ENCODE measurements at regions of chr6 and their contacts with region 1.

Region 1: DNA sequence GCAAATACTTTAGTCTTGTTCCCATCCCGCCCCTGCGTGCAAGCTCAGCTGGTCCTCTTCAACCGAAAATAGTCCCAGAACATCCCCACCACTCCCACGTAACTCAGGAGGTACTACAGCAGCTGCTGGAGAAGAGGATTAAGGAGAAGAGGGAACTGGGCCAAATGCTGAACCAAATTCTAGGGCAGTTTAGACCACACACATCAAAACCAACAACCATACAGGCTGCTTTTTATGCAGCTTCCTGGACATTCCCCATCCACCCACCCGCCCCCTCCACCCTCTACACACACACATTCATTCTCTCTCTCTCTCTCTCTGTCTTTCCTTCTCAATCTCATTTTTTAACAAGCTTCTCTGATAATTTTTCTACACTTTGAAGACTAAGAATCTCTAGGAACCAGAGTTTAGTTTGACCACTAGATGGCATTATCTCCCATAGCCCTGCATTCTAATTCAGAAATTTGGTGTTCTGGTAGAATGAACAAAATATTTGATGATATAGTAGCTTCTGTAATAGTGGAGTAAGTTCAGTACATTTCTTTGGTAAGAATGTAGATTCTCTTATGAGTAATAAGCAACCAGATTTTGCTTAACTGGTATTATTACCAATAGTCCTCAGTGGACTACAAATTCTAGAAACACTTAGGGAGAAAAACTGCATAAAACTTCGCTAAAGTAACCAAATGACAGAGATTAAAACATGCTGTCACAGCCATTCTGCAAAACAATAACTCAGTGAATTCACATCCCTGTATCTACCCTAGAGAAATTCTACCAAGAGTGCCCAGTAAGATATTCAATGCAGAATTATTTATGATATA is 52.1 kb upstream of the BEND6 start:
- DNase-seq: no peak
- H3K4me3 ChIP-seq: no peak overlapping the region
- H3K27ac ChIP-seq: no peak overlapping the region
- H3K4me1 ChIP-seq: no peaks in the 10 kb centered on the region
- H3K27me3 ChIP-seq: no peaks in the 10 kb centered on the region
- CTCF ChIP-seq: peak in 2 of 3 experiments; percentile 41 to 60; a peak in 2 of 4 replicates
- EP300 ChIP-seq: no peak
- POLR2A ChIP-seq: no peak
- RAD21 ChIP-seq: peak; percentile 52 to 55

Region 2: GRCh38 chr6:56890683-56891429 is 12.0 kb before region 1 on chr6:
- CTCF ChIA-PET with region 1: interaction called, 29 read pairs
- POLR2A ChIA-PET with region 1: interaction called, 3 read pairs
- DNase-seq: no peak
- H3K4me3 ChIP-seq: no peak overlapping the region
- H3K27ac ChIP-seq: no peak overlapping the region
- H3K4me1 ChIP-seq: no peaks in the 10 kb centered on the region
- H3K27me3 ChIP-seq: no peaks in the 10 kb centered on the region
- CTCF ChIP-seq: no peak
- EP300 ChIP-seq: no peak
- POLR2A ChIP-seq: no peak
- RAD21 ChIP-seq: no peak

Region 3: DNA sequence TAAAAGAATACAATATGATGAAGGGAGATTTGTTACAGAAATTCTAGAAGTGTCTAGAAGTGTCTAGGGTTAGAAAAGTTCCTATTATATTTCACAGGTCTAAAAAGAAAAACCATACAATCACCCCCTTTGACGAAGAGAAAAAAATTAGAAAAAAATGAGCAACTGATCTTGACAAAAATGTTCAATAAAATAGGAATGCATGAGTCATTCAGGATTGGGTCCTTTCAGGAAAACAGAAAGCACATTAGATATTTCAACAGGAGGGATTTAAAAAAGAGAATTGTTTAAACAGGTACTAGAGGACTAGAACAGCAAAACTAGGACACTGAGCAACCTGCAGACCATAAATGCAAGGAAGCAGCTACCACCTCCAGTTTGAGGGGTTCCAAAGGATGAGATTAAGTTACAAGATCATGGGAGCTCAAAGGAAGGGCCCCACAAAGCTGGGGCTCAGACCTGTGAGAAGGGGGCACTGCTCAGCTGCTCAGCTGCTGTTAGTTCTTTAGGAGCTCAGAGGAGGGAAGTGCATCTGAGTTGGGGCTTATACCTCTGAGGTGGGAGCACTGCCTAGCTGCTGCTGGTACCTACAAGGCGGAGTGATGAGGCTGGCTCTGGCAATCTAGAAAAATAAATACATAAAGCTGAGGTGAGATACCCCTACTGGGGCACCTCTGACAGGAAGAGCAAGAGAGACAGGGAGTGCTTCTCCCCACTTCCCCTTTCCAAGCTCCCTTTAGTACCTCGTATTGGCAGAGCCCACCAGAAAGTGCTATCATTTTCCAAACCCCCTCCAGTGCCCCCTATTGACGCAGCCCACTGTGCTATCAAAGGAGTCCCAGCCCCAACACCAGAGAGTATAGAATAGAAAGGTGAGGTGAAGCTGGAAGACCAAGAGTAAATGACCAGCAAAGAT is 24.9 kb after region 1 on chr6:
- CTCF ChIA-PET with region 1: interaction called, 66 read pairs
- POLR2A ChIA-PET with region 1: no interaction called
- DNase-seq: peak in 1 of 2 experiments; percentile 57
- H3K4me3 ChIP-seq: no peak overlapping the region; a peak in 1 of 8 replicates
- H3K27ac ChIP-seq: no peak overlapping the region
- H3K4me1 ChIP-seq: no peaks in the 10 kb centered on the region; a peak in 2 of 7 replicates
- H3K27me3 ChIP-seq: no peaks in the 10 kb centered on the region
- CTCF ChIP-seq: peak in 2 of 3 experiments; percentile 21 to 32; a peak in 3 of 4 replicates
- EP300 ChIP-seq: no peak
- POLR2A ChIP-seq: no peak
- RAD21 ChIP-seq: no peak; a peak in 1 of 4 replicates

Region 4: GRCh38 chr6:56955171-56956045 is 52.6 kb after region 1 on chr6:
- CTCF ChIA-PET with region 1: interaction called, 13 read pairs
- POLR2A ChIA-PET with region 1: interaction called, 12 read pairs
- DNase-seq: peak; percentile 90 to 98
- H3K4me3 ChIP-seq: peak overlapping the region; percentile 61 to 78 (median 72)
- H3K27ac ChIP-seq: peak overlapping the region; percentile 2; the same call in 1 of the 2 replicates
- H3K4me1 ChIP-seq: peaks cover 0 to 13% (median 5%) of the 10 kb centered on the region in 4 experiments; a peak in 4 of 7 replicates
- H3K27me3 ChIP-seq: peaks cover 0 to 18% (median 10%) of the 10 kb centered on the region in 4 experiments; a peak in 5 of 7 replicates
- CTCF ChIP-seq: peak; percentile 73 to 84 (median 82)
- EP300 ChIP-seq: no peak
- POLR2A ChIP-seq: peak; percentile 24 to 61
- RAD21 ChIP-seq: peak; percentile 72 to 79

Region 5: DNA sequence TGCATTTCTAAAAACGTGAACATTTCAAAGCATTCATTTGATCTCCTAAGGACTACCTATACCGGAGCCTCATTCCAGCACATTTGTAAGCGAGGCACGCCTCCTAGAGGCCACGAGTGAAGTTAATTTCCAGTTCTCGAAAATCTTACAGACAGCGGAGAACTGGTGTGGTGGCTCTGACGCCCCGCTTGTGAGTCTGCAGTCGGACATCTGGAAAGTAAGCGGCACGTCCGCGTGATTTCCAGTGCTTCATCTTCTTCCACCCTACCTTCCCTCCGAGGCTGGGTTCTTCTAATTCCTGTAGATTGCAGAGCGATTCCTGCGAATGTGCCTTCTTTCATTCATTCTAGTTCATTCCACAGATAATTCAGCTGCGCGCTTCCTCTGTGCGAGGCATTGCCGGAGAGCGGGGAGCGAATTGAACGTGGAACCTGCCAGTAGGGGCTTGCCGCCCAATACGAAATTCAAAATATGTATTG is 413.8 kb after region 1 on chr6:
- CTCF ChIA-PET with region 1: interaction called, 34 read pairs
- POLR2A ChIA-PET with region 1: no interaction called
- DNase-seq: peak; percentile 56 to 81
- H3K4me3 ChIP-seq: peak overlapping the region; percentile 77 to 83 (median 80)
- H3K27ac ChIP-seq: no peak overlapping the region
- H3K4me1 ChIP-seq: no peaks in the 10 kb centered on the region
- H3K27me3 ChIP-seq: no peaks in the 10 kb centered on the region
- CTCF ChIP-seq: peak; percentile 40 to 87 (median 84)
- EP300 ChIP-seq: no peak
- POLR2A ChIP-seq: no peak
- RAD21 ChIP-seq: peak; percentile 98 to 99